GM18951 (cell line): ENCODE measurements at regions of chr18 and their contacts with region 1.

Region 1: DNA sequence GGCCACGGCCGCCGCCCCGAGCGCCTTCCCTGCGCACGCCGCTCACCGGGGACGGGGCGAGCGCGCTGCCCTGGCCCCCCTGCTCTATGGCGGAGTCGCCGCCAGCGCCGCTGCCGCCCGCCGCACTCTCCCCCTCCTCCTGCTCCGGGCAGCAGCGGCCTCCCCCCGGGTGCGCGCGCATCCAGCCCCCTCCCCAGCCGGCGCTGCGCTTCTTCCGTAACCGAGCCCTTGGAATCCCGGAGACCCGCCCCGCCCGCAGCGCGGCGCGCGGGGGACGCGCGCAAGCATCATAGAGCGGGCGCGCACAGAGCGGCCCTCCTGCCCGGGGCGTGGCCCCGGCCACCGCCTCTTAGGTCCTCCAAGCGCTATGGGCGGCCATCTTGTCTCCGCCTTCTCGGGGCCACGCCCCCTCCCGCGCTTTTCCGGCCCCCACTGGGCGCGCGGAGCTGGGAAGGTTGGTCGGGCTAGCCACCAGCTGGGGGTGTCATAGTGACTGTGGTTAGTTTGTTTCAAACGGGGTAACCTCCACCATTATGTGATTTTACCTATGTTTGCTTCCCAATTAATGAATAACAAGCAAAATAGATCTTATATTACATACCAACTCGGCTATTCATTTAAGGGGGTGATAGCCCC is at the start of gene MBD2:
- POLR2A ChIP-seq: peak; percentile 70

Region 2: GRCh38 chr18:53567929-53568574 is 656.4 kb before region 1 on chr18:
- in situ Hi-C with region 1: no loop called
- POLR2A ChIP-seq: no peak

Region 3: DNA sequence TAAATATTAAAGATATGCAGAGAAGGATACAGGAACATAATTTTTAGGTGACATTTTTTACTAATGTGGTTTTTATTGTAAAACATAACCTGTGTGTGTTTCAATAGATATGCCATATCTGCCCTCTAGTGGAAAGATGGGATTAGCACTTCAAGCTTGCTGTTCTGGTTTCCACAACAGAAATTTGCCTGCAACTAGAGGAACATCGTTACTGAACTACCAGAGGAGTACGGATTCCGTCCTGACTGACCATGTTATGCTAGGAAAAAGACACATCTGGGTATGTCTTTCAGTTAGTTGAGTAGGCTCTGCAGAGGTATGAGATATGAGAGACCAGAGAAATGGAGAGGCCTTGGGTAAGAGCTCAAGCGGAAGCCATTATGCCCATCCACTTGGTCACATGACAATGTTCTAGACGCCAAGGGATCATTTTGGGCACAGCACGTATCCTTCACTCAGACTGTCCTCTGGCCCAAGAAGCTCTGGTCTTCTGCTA is 104.9 kb before region 1 on chr18:
- in situ Hi-C with region 1: no loop called
- POLR2A ChIP-seq: no peak

Region 4: DNA sequence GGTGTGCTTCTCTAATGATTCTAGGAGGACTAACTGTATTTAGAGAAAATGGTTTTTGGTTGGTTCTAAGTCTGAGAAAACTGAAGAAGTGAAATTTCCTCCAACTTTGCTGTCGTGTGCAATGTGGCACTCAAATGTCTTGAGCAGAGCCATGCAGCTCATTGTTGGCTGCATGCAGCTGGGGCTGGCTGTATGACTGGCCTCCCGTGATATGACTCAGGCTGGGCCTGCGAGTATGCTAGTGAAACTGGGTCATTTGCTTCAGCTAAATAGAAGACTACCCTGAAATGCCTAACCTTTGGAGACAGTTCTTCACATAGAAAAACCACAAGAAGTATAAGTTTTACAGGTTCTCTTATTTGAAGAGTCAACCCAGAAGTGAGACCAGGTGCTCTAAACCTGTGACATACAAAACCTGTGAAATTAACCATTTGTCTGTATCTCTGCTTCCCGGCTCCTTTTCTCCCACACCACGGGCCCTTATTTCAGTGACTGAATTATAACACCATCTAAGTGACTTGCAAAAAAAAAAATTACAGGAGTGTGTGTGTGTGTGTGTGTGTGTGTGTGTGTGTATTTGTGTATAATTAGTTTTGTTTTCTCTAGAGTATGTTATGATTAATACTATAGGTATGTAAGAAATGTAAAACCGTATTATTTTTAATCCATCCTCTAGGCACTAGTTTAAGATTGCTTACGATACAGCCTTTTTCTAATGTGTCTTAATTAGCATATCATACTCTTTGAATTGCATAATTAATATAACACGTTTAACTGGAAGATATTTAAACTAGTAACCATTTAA is 60.7 kb after region 1 on chr18:
- in situ Hi-C with region 1: loop called (anchors 5 kb)
- POLR2A ChIP-seq: peak; percentile 39

Region 5: DNA sequence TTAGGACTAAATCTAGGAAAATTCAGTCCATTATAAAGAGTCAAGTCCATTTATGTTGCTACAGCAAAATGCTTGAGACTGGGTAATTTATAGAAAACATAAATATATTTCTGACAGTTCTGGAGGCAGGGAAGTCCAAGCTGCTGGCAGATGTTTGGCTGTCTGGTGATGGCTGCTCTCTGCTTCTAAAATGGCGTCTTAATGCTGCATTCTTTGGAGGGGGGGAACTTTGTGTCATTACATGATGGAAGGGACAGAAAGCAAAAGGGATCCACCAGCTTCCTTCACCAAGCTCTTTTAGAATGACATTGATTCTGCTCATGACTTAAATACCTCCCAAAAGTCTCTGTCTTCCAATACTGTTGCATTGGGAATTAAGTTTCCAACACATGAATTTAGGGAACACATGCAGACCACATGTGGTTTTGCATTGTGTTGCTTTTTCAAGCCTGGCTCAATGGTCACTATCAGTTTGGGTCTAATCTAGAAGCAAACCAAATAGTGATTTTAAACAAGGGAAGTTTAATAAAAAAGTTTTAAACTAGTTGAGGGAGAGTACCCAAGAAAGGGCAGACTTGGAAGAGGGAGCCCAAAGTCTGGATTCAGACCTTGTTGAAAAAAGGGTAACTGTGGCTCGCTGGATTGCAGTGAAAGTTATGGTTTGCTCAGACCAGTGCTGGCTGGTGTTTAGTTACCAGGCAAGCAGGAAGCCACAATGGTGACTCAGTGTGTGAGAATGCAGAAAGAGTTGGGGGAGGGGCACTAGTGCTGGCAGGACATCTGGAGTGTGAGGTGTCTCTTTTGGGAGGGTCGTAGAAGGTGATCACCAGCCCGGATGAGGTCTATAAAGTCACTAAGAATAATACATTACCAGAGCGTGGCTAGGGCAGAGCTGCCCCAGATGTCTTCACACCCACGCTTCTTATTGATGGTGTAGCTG is 164.0 kb after region 1 on chr18:
- in situ Hi-C with region 1: loop called (anchors 10 kb)
- POLR2A ChIP-seq: no peak